Activated CD4-positive, alpha-beta T cell treated with anti-CD3 and anti-CD28 coated beads for 36 hours (primary cell): ENCODE measurements at regions of chr5 and their contacts with region 1.

Region 1: GRCh38 chr5:149434162-149435014 is 55.3 kb upstream of the IL17B start:
- DNase-seq: peak; percentile 75
- ATAC-seq: peak; percentile 66
- H3K4me3 Mint-ChIP-seq: no peak overlapping the region
- H3K27ac Mint-ChIP-seq: no peak overlapping the region
- H3K4me1 Mint-ChIP-seq: peaks cover 14% of the 10 kb centered on the region
- H3K27me3 Mint-ChIP-seq: no peaks in the 10 kb centered on the region

Region 2: DNA sequence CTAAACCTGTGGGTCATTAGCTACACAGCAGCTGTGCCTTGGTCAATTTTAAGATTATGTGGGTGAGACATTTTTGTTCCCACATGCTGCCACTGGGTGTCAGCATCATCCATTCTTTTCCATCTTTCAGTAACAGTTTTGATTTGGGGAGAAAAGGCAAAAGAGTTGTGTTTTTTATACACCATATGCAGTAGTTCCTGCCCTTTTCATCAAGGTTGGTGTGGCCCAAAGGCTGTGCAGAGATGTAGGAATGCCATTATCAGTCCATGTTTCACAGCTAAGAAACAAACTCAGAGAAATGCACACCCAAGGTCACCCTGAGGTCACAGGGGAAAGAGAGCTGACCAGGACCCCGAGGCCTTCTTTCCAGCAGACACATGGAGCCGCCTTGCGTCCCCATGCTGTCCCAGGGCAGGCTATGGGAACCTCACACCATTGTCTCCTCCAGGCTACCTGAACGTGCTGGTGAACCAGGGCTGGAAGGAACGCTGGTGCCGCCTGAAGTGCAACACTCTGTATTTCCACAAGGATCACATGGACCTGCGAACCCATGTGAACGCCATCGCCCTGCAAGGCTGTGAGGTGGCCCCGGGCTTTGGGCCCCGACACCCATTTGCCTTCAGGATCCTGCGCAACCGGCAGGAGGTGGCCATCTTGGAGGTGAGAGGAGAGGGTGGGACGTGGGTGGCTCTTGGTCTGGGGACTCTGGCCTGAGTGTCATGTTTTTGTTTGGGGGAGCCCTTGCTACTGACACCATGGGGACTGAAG is 116.9 kb before region 1 on chr5:
- CTCF ChIA-PET with region 1: interaction called, 23 read pairs
- POLR2A ChIA-PET with region 1: no interaction called
- intact Hi-C with region 1: loop called (anchors 1 kb)
- DNase-seq: peak; percentile 52
- ATAC-seq: peak; percentile 74
- H3K4me3 Mint-ChIP-seq: no peak overlapping the region
- H3K27ac Mint-ChIP-seq: no peak overlapping the region
- H3K4me1 Mint-ChIP-seq: no peaks in the 10 kb centered on the region
- H3K27me3 Mint-ChIP-seq: no peaks in the 10 kb centered on the region

Region 3: DNA sequence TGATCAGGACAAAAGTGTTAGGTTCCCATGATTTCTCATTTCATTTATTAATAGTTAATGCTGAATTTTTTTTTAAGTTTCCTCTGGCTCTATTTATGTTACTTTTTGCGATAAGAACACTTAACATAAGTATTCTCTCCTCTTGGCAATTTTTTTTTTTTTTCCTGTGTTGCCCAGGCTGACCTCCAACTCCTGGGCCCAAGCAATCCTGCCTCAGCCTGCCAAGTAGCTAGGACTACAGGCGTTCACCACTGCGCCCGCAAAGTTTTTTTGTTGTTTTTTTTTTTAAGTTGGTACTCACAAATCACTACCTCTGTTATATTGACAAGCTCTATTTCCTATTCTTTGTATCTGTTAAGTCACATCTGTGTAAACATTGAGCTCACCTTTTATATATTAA is 82.2 kb before region 1 on chr5:
- CTCF ChIA-PET with region 1: no interaction called
- POLR2A ChIA-PET with region 1: no interaction called
- intact Hi-C with region 1: no loop called
- DNase-seq: no peak
- ATAC-seq: no peak
- H3K4me3 Mint-ChIP-seq: no peak overlapping the region
- H3K27ac Mint-ChIP-seq: peak overlapping the region; percentile 47
- H3K4me1 Mint-ChIP-seq: peaks cover 84% of the 10 kb centered on the region
- H3K27me3 Mint-ChIP-seq: no peaks in the 10 kb centered on the region

Region 4: GRCh38 chr5:149381987-149382340 is 52.4 kb before region 1 on chr5:
- CTCF ChIA-PET with region 1: interaction called, 25 read pairs
- POLR2A ChIA-PET with region 1: no interaction called
- intact Hi-C with region 1: loop called (anchors 1 kb)
- DNase-seq: peak; percentile 87
- ATAC-seq: peak; percentile 97
- H3K4me3 Mint-ChIP-seq: no peak overlapping the region
- H3K27ac Mint-ChIP-seq: no peak overlapping the region
- H3K4me1 Mint-ChIP-seq: no peaks in the 10 kb centered on the region
- H3K27me3 Mint-ChIP-seq: no peaks in the 10 kb centered on the region

Region 5: GRCh38 chr5:149406203-149406978 is 28.0 kb before region 1 on chr5:
- CTCF ChIA-PET with region 1: interaction called, 16 read pairs
- POLR2A ChIA-PET with region 1: no interaction called
- intact Hi-C with region 1: no loop called
- DNase-seq: no peak
- ATAC-seq: no peak
- H3K4me3 Mint-ChIP-seq: no peak overlapping the region
- H3K27ac Mint-ChIP-seq: no peak overlapping the region
- H3K4me1 Mint-ChIP-seq: no peaks in the 10 kb centered on the region
- H3K27me3 Mint-ChIP-seq: no peaks in the 10 kb centered on the region

Region 6: GRCh38 chr5:149422366-149423048 is 11.9 kb before region 1 on chr5:
- CTCF ChIA-PET with region 1: interaction called, 12 read pairs
- POLR2A ChIA-PET with region 1: no interaction called
- intact Hi-C with region 1: no loop called
- DNase-seq: peak; percentile 32
- ATAC-seq: peak; percentile 47
- H3K4me3 Mint-ChIP-seq: no peak overlapping the region
- H3K27ac Mint-ChIP-seq: no peak overlapping the region
- H3K4me1 Mint-ChIP-seq: peaks cover 15% of the 10 kb centered on the region
- H3K27me3 Mint-ChIP-seq: no peaks in the 10 kb centered on the region

Region 7: DNA sequence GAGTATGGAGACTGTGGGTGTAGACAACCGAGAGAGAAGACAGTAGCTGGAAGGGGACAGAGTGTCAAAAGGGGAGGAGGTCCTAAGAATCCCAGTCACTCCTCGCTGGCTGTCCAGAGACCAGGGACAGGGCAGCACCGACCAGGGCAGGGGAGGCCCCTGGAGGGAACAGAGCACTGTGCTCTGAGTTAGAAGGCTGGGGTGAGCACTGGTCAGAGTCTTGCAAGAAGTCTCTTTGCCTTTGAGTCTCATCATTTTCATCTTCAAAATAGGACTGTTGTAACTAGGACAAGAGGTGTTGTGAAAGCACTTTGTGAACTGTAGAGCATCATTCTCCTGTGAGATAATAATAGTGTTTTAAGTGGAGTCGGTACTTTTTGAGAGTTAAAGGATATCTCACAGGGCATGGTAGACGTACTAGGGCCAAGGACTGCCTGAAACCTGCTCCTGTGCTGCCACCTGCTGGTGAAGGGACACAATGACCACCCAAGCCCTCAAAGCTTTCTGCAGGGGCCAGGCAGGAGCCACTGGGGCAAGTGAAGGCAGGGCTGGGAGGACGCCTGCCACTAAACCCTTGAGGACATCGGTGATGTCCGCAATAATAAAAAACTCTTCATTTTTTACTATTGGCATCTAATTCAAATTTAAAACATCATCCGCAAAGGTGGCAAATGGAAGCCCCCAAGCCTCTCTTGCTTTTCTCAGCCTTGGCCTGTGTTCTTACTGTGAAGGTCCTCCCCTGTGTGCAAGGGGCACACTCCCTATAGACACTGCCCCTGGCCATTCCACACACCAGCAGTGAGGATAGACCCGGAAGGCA is 783.7 kb after region 1 on chr5:
- CTCF ChIA-PET with region 1: no interaction called
- POLR2A ChIA-PET with region 1: no interaction called
- intact Hi-C with region 1: no loop called
- DNase-seq: peak; percentile 89
- ATAC-seq: peak; percentile 97
- H3K4me3 Mint-ChIP-seq: no peak overlapping the region
- H3K27ac Mint-ChIP-seq: no peak overlapping the region
- H3K4me1 Mint-ChIP-seq: no peaks in the 10 kb centered on the region
- H3K27me3 Mint-ChIP-seq: peaks cover 3% of the 10 kb centered on the region